Transverse colon (tissue), 4 donors: ENCODE measurements at regions of chr9 and their contacts with region 1.

Region 1: DNA sequence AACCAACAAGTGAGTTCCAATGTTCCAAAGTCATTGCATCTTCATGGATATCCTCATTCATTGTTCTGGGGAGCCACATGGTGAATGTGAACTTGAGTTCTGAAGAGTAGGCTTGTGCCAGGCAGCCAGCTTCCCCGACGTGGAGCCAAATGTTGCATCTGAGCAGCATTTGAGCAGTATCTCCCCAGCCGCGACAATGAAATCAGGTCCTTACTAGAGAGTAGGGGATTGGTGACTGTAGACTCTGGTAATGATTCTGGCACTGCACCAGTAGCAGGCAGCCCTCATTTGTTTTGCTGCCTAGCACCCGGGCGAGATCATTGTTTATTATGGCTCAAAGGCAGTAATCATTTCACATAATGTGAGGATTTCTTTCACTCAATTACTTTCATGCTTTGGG is 451.4 kb upstream of the C9orf72 start:
- DNase-seq: no peak
- H3K4me3 ChIP-seq: no peak overlapping the region
- H3K27ac ChIP-seq: no peak overlapping the region
- H3K4me1 ChIP-seq: no peaks in the 10 kb centered on the region
- H3K27me3 ChIP-seq: no peaks in the 10 kb centered on the region
- CTCF ChIP-seq: no peak
- EP300 ChIP-seq: no peak
- POLR2A ChIP-seq: no peak

Region 2: DNA sequence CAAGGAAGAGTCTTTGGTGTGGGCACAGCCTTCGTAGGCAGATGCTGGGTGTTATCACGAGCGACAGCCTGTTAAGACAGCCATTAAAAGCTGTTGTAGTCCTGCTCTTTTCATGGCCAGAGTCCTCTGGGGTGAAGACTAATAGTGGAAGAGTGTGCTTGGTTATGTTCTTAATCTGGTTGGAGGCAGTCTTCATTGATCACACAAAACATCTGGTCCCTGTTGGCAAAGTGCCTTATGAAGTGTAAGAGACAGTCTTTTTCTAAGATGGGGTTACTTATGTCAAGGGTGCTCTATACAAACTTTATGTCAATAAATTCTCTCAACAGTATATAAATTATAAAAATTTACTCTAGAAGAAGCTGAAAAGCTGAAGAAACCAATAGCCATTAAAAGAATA is 1412.5 kb before region 1 on chr9:
- in situ Hi-C with region 1: no loop called
- intact Hi-C with region 1: loop called (anchors 5 kb)
- DNase-seq: no peak
- H3K4me3 ChIP-seq: no peak overlapping the region
- H3K27ac ChIP-seq: no peak overlapping the region
- H3K4me1 ChIP-seq: no peaks in the 10 kb centered on the region
- H3K27me3 ChIP-seq: no peaks in the 10 kb centered on the region
- CTCF ChIP-seq: no peak
- EP300 ChIP-seq: no peak
- POLR2A ChIP-seq: no peak

Region 3: GRCh38 chr9:27888661-27889295 is 135.9 kb before region 1 on chr9:
- in situ Hi-C with region 1: no loop called
- intact Hi-C with region 1: no loop called
- DNase-seq: peak; percentile 33
- H3K4me3 ChIP-seq: no peak overlapping the region
- H3K27ac ChIP-seq: no peak overlapping the region
- H3K4me1 ChIP-seq: no peaks in the 10 kb centered on the region
- H3K27me3 ChIP-seq: no peaks in the 10 kb centered on the region
- CTCF ChIP-seq: peak in 4 of 5 experiments; percentile 52 to 67 (median 60)
- EP300 ChIP-seq: no peak
- POLR2A ChIP-seq: no peak

Region 4: DNA sequence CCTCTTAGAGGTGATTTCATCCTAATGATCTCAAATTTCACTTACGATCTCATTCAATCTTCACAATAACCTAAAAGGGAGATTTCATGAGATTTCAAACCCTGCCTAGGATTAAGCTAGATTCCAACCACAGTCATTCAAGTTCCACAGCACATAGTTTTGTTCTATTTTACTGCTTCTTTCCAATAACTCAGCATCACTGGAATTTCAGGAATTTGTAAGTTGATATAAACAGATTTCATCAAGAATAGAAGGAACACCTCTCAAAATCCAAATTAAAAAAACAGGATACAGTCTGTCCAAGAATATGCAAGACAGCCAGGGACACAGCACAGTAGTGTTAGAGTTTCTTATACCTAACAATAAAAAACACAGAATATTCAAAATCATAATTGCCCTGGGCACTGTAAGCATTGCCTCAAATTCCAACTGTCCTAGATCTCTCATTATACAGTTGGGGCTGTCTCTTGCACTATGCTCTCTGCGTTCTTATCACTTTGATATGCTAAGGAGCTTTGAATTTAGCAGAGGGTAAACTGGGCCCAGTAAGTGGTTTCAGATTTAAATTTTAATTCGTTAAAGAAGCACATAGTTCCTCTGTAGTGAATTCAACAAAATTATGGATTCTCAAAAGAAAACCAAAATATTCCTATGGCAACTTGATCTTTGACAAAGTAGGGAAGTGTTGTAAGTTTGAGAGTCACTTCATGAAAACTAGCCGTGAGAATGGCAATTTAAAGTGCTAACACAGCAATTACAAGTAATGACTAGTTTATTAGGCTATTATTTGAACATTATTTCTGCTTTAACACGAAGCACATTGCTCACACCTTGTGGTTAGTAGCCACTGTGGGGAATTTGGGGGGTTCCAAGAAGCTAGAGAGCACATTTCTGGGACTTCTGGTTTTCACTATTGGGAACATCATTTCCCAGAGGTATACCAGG is 27.2 kb after region 1 on chr9:
- in situ Hi-C with region 1: no loop called
- intact Hi-C with region 1: no loop called
- DNase-seq: no peak
- H3K4me3 ChIP-seq: no peak overlapping the region
- H3K27ac ChIP-seq: no peak overlapping the region
- H3K4me1 ChIP-seq: no peaks in the 10 kb centered on the region
- H3K27me3 ChIP-seq: no peaks in the 10 kb centered on the region
- CTCF ChIP-seq: no peak
- EP300 ChIP-seq: no peak
- POLR2A ChIP-seq: no peak